ENCODE measurements at regions of chr17 and their contacts with region 1.

Region 1: GRCh38 chr17:20315821-20316220 is 151.5 kb downstream of the LGALS9B start:
- DNase-seq: no peak
- H3K4me3 ChIP-seq: no peak overlapping the region
- H3K27ac ChIP-seq: no peak overlapping the region
- H3K4me1 ChIP-seq: no peaks in the 10 kb centered on the region
- H3K27me3 ChIP-seq: no peaks in the 10 kb centered on the region
- CTCF ChIP-seq: no peak

Region 2: GRCh38 chr17:20121359-20122253 is 194.2 kb before region 1 on chr17:
- CTCF ChIA-PET with region 1: no interaction called
- POLR2A ChIA-PET with region 1: no interaction called
- intact Hi-C with region 1: loop called (anchors 5 kb)
- DNase-seq: peak; percentile 53
- H3K4me3 ChIP-seq: no peak overlapping the region
- H3K27ac ChIP-seq: no peak overlapping the region
- H3K4me1 ChIP-seq: no peaks in the 10 kb centered on the region
- H3K27me3 ChIP-seq: no peaks in the 10 kb centered on the region
- CTCF ChIP-seq: peak; percentile 96

Measured in A673 (cell line).